PC-3 (cell line): ENCODE measurements at regions of chr18 and their contacts with region 1.

Region 1: GRCh38 chr18:63741769-63742168 is 33.4 kb upstream of the SERPINB7 start:
- DNase-seq: peak; percentile 81
- ATAC-seq: peak; percentile 72
- H3K4me3 ChIP-seq: no peak overlapping the region
- H3K27ac ChIP-seq: peak overlapping the region; percentile 97
- H3K4me1 ChIP-seq: peaks cover 20% of the 10 kb centered on the region
- H3K27me3 ChIP-seq: no peaks in the 10 kb centered on the region
- CTCF ChIP-seq: peak; percentile 88

Region 2: DNA sequence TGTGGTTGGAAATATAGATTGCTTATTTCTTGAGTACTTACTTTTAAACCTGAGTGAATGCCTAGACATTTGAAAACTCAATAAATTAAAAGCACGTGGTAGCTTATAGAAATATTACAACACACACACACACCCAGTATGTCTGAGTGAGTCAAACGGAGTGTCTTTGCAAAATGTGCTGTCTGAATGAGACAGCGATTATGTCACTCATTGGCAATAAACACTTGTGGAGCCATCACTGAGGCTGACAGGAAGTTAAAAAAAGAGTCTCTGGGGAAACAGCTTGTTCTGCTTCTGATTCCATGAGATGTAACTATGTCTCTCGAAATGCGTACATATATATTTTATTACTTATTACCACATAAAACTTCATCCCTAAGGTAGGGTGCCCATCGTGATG is 297.2 kb before region 1 on chr18:
- CTCF ChIA-PET with region 1: no interaction called
- POLR2A ChIA-PET with region 1: no interaction called
- intact Hi-C with region 1: no loop called
- DNase-seq: peak; percentile 83
- ATAC-seq: peak; percentile 60
- H3K4me3 ChIP-seq: no peak overlapping the region
- H3K27ac ChIP-seq: peak overlapping the region; percentile 81
- H3K4me1 ChIP-seq: peaks cover 29% of the 10 kb centered on the region
- H3K27me3 ChIP-seq: no peaks in the 10 kb centered on the region
- CTCF ChIP-seq: no peak

Region 3: GRCh38 chr18:63511286-63511685 is 230.5 kb before region 1 on chr18:
- CTCF ChIA-PET with region 1: interaction called, 35 read pairs
- POLR2A ChIA-PET with region 1: no interaction called
- intact Hi-C with region 1: no loop called
- DNase-seq: peak; percentile 87
- ATAC-seq: peak; percentile 87
- H3K4me3 ChIP-seq: no peak overlapping the region
- H3K27ac ChIP-seq: no peak overlapping the region
- H3K4me1 ChIP-seq: no peaks in the 10 kb centered on the region
- H3K27me3 ChIP-seq: no peaks in the 10 kb centered on the region
- CTCF ChIP-seq: peak; percentile 85

Region 4: GRCh38 chr18:63578357-63578958 is 163.3 kb before region 1 on chr18:
- CTCF ChIA-PET with region 1: interaction called, 4 read pairs
- POLR2A ChIA-PET with region 1: no interaction called
- intact Hi-C with region 1: loop called (anchors 1 kb)
- DNase-seq: peak; percentile 69
- ATAC-seq: peak; percentile 48; the same call in 1 of the 2 replicates
- H3K4me3 ChIP-seq: no peak overlapping the region
- H3K27ac ChIP-seq: no peak overlapping the region
- H3K4me1 ChIP-seq: no peaks in the 10 kb centered on the region
- H3K27me3 ChIP-seq: no peaks in the 10 kb centered on the region
- CTCF ChIP-seq: peak; percentile 90

Region 5: DNA sequence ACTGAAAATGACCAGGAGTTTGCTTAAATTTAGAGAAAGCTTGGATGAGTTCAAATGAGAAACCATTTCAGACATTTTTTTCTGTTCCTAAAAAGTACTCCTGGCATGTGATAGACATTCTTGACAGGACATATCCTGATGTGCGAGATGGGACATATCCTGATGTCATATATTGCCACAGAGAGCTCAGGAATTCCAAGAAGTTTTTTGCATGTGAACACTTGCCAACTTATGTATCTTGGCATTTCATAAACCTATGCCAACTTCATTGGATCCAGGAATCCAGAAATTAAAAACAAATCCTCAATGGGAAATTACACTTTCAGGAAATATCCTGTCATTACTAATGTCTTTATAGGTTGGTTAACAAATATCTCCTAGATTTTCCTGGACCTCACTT is 77.2 kb before region 1 on chr18:
- CTCF ChIA-PET with region 1: no interaction called
- POLR2A ChIA-PET with region 1: no interaction called
- intact Hi-C with region 1: no loop called
- DNase-seq: no peak
- ATAC-seq: no peak; the same call in 1 of the 2 replicates
- H3K4me3 ChIP-seq: no peak overlapping the region
- H3K27ac ChIP-seq: peak overlapping the region; percentile 23; the same call in 1 of the 2 replicates
- H3K4me1 ChIP-seq: peaks cover 5% of the 10 kb centered on the region
- H3K27me3 ChIP-seq: no peaks in the 10 kb centered on the region
- CTCF ChIP-seq: no peak

Region 6: GRCh38 chr18:63683152-63683551 is 58.6 kb before region 1 on chr18:
- CTCF ChIA-PET with region 1: interaction called, 10 read pairs
- POLR2A ChIA-PET with region 1: no interaction called
- intact Hi-C with region 1: loop called (anchors 1 kb)
- DNase-seq: peak; percentile 97
- ATAC-seq: peak; percentile 87
- H3K4me3 ChIP-seq: peak overlapping the region; percentile 36; the same call in 1 of the 2 replicates
- H3K27ac ChIP-seq: peak overlapping the region; percentile 100
- H3K4me1 ChIP-seq: peaks cover 48% of the 10 kb centered on the region
- H3K27me3 ChIP-seq: no peaks in the 10 kb centered on the region
- CTCF ChIP-seq: no peak

Region 7: DNA sequence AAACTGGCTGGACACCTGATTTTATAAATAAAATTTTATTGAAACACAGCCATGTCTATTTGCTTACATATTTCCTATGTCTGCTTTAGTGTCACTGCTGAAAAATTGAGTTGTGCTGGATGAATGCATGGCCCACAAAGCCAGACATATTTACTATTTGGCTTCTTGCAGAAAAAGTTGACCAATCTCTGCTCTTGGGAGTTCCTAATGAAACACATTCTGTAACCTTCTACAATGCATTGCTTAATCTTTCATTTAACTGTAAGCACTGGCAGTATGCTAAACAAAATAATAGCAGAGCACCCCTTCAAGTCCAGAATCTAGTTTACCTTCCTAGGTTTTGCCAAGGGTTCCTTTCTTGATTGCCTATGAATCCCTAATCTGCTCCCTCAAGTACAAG is 15.8 kb after region 1 on chr18:
- CTCF ChIA-PET with region 1: no interaction called
- POLR2A ChIA-PET with region 1: no interaction called
- intact Hi-C with region 1: no loop called
- DNase-seq: no peak
- ATAC-seq: no peak
- H3K4me3 ChIP-seq: no peak overlapping the region
- H3K27ac ChIP-seq: no peak overlapping the region
- H3K4me1 ChIP-seq: peaks cover 9% of the 10 kb centered on the region
- H3K27me3 ChIP-seq: no peaks in the 10 kb centered on the region
- CTCF ChIP-seq: no peak

Region 8: DNA sequence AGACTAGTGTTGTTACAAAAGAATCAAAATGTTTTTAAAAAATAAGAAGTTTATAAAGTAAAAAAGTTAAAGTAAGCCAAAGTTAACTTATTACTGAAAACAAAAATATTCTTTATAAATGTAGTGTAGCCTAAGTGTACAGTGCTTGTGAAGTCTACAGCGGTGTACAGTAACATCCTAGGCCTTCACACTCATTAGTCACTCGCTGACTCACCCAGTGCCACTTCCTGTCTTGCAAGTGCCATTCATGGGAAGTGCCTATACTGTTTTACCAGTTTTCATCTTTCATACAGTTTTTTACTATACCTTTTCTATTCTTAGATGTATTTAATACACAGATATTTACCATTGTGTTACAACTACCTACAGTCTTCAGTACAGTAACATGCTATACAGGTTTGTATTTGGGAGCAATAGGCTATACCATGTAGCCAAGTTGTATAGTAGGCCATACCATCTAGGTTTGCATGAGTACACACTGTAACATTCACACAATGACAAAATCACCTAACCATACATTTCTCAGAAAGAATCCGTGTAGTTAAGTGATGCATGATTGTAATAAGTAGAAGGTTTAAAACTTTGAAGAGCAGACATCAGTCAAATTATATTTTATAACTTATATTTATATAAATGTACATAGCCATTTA is 46.8 kb after region 1 on chr18:
- CTCF ChIA-PET with region 1: no interaction called
- POLR2A ChIA-PET with region 1: interaction called, 11 read pairs
- intact Hi-C with region 1: no loop called
- DNase-seq: peak; percentile 96
- ATAC-seq: peak; percentile 98
- H3K4me3 ChIP-seq: no peak overlapping the region
- H3K27ac ChIP-seq: peak overlapping the region; percentile 100
- H3K4me1 ChIP-seq: peaks cover 32% of the 10 kb centered on the region
- H3K27me3 ChIP-seq: no peaks in the 10 kb centered on the region
- CTCF ChIP-seq: no peak

Region 9: GRCh38 chr18:64137914-64138313 is 396.1 kb after region 1 on chr18:
- CTCF ChIA-PET with region 1: no interaction called
- POLR2A ChIA-PET with region 1: no interaction called
- intact Hi-C with region 1: no loop called
- DNase-seq: no peak
- ATAC-seq: no peak
- H3K4me3 ChIP-seq: no peak overlapping the region
- H3K27ac ChIP-seq: no peak overlapping the region
- H3K4me1 ChIP-seq: no peaks in the 10 kb centered on the region
- H3K27me3 ChIP-seq: peaks cover 58% of the 10 kb centered on the region
- CTCF ChIP-seq: no peak